Activated naive CD4-positive, alpha-beta T cell treated with anti-CD3 and anti-CD28 coated beads for 36 hours (primary cell): ENCODE measurements at regions of chr14 and their contacts with region 1.

Region 1: GRCh38 chr14:74860906-74861733 is 14.8 kb downstream of the PROX2 start:
- DNase-seq: peak; percentile 97
- H3K4me3 Mint-ChIP-seq: no peak overlapping the region
- H3K27ac Mint-ChIP-seq: no peak overlapping the region
- H3K4me1 Mint-ChIP-seq: peaks cover 2% of the 10 kb centered on the region
- H3K27me3 Mint-ChIP-seq: no peaks in the 10 kb centered on the region

Region 2: DNA sequence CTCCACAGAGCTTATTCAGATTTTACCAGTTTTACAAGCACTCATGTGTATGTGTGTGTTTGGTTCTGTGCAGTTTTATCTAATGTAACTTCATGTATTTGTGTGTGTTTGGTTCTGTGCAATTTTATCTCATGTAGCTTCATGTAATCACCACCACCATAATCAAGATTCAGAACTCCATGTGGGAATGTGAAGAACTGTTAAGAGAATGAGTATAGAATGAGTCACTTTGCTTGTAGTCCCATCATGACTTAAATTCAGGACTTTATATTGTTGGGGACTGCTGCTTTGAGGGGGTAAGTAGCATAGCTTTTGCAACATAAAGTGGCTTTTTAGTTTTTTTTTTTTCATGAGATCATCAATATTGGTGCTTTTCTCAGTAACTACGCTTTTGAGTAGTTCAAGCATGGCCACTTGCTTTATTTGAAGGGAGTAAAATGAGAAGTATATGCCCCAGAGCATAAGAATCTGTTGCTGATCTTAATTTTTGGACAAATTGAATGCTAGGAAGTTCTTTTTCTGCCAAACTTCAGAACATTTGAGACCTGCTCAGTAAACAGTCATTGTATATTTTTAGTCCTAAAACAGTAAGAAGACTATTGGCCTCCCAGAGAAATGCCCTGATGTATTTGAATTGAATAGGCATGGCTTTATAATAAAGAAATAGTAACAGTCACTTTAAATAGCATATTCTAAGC is 14.0 kb before region 1 on chr14:
- CTCF ChIA-PET with region 1: interaction called, 44 read pairs
- intact Hi-C with region 1: no loop called
- DNase-seq: no peak
- H3K4me3 Mint-ChIP-seq: no peak overlapping the region
- H3K27ac Mint-ChIP-seq: no peak overlapping the region
- H3K4me1 Mint-ChIP-seq: peaks cover 10% of the 10 kb centered on the region
- H3K27me3 Mint-ChIP-seq: no peaks in the 10 kb centered on the region

Region 3: DNA sequence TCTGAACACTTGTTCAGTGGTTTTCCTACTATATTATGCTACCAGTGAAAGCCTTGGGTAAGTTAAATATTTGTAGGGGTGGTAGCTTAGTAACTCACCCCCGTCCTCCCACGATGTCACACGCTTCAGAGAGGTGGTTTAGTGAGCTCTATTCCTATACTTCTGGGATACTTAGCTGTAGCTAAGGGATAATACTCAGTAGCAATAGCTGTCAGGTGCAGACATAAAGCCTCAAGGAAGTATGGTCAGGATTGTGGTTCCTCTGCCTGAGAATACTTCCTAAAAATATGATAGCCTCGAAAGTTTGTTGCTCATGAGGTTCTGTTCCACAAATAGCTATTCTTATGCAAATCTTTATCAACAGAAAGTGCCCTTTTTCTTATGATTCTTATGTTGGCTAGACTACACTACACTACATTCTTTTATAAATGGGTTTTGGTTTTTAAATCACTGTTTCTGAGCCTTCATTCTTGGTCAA is 32.5 kb after region 1 on chr14:
- CTCF ChIA-PET with region 1: interaction called, 379 read pairs
- intact Hi-C with region 1: no loop called
- DNase-seq: no peak
- H3K4me3 Mint-ChIP-seq: no peak overlapping the region
- H3K27ac Mint-ChIP-seq: peak overlapping the region; percentile 16
- H3K4me1 Mint-ChIP-seq: no peaks in the 10 kb centered on the region
- H3K27me3 Mint-ChIP-seq: no peaks in the 10 kb centered on the region

Region 4: DNA sequence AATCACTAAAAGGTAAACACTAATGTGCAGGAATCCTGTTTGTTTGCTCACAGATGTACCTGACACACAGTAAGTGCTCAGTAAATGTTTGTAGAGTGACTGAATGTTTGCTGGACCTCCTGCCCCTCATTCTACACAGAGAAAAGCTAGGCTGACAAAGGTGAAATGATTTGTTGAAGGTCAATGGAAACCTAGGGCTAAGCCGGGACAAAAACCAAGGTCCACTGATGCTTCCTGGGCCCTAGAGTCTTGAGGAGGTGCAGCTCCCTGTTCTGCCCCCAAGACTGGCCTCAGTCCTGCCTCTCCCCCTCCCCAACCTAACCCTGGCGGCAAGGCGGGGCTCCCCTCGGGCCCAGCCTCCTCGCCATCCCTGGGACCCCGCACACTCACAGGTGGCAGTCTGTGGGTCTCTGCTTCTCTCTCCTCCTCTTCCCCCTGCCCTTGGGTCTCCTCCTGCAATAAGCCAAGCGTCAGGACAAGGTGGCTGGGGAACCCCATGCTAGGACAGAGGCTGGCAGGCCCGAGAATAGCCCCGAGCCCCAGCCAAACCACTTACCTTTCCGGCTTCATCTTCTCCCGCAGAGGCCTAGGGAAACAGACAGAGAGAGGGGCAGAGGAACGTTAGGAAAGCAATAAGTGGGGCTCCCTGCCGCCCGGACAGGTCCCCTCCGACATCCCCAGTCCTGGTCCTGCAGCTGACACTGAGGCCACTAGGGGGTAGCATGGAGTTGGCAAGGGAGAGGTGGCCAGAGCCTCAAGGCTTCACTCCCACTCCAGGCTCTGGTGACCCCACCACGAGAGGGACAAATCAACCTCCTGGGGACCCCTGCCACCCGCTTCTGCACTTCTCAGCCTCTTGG is 84.9 kb after region 1 on chr14:
- CTCF ChIA-PET with region 1: interaction called, 40 read pairs
- intact Hi-C with region 1: no loop called
- DNase-seq: peak; percentile 87
- H3K4me3 Mint-ChIP-seq: peak overlapping the region; percentile 50
- H3K27ac Mint-ChIP-seq: peak overlapping the region; percentile 62
- H3K4me1 Mint-ChIP-seq: peaks cover 26% of the 10 kb centered on the region
- H3K27me3 Mint-ChIP-seq: peaks cover under 1% of the 10 kb centered on the region

Region 5: GRCh38 chr14:75604856-75605851 is 744.0 kb after region 1 on chr14:
- CTCF ChIA-PET with region 1: no interaction called
- intact Hi-C with region 1: no loop called
- DNase-seq: no peak
- H3K4me3 Mint-ChIP-seq: no peak overlapping the region
- H3K27ac Mint-ChIP-seq: no peak overlapping the region
- H3K4me1 Mint-ChIP-seq: no peaks in the 10 kb centered on the region
- H3K27me3 Mint-ChIP-seq: no peaks in the 10 kb centered on the region